GM12878 (cell line): ENCODE measurements at regions of chr2 and their contacts with region 1.

Region 1: GRCh38 chr2:227766373-227766883 is 20.7 kb downstream of the SCYGR8 start:
- DNase-seq: no peak
- ATAC-seq: peak; percentile 100
- H3K4me3 ChIP-seq: no peak overlapping the region
- H3K27ac ChIP-seq: no peak overlapping the region
- H3K4me1 ChIP-seq: no peaks in the 10 kb centered on the region
- H3K27me3 ChIP-seq: no peaks in the 10 kb centered on the region
- CTCF ChIP-seq: peak; percentile 84 to 91 (median 84)
- EP300 ChIP-seq: no peak
- POLR2A ChIP-seq: no peak
- RAD21 ChIP-seq: peak; percentile 93

Region 2: DNA sequence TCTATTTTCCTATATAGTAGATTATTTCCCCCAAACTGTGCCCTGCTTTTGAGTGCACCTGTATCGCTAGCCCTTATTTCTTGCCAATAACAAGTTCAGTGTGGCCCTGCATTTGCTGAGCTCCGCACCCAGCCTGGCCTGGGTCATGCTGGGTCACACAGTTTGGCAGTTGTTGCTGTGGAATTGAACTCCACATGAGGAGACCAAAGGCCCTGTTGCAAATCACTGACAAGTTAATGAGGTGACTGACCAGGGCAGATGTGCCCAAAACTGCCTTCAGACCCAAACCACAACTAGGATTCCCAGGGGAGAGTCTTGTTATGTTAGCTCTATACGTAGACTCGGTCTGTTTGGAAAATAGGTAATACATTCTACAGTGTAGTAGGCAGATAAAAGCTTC is 633.4 kb before region 1 on chr2:
- CTCF ChIA-PET with region 1: interaction called, 12 read pairs
- POLR2A ChIA-PET with region 1: interaction called, 5 read pairs
- RAD21 ChIA-PET with region 1: interaction called, 5 read pairs
- SMC1A ChIA-PET with region 1: interaction called, 11 read pairs
- in situ Hi-C with region 1: loop called (anchors 10 kb)
- intact Hi-C with region 1: loop called (anchors 1 kb)
- DNase-seq: no peak
- ATAC-seq: no peak
- H3K4me3 ChIP-seq: no peak overlapping the region
- H3K27ac ChIP-seq: no peak overlapping the region
- H3K4me1 ChIP-seq: no peaks in the 10 kb centered on the region
- H3K27me3 ChIP-seq: no peaks in the 10 kb centered on the region
- CTCF ChIP-seq: no peak
- EP300 ChIP-seq: no peak
- POLR2A ChIP-seq: no peak
- RAD21 ChIP-seq: no peak

Region 3: DNA sequence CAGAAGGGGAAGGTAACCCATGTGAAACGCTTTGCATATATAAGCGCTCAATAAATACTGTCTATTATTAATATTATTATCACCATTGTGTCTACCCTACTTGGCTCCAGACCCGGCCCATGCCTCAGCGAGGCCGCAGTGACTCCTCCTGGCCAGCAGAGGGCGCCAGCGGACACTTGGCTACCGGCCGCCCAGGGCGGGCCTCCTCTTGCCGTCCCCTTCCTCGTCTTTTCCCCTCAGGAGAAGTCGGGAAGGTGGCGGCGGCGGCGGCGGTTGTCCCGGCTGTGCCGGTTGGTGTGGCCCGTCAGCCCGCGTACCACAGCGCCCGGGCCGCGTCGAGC is 294.5 kb before region 1 on chr2 and contains the start of gene AGFG1:
- CTCF ChIA-PET with region 1: interaction called, 34 read pairs
- POLR2A ChIA-PET with region 1: no interaction called
- RAD21 ChIA-PET with region 1: interaction called, 6 read pairs
- SMC1A ChIA-PET with region 1: interaction called, 10 read pairs
- in situ Hi-C with region 1: no loop called
- intact Hi-C with region 1: loop called (anchors 2 kb)
- DNase-seq: no peak
- ATAC-seq: peak; percentile 81
- H3K4me3 ChIP-seq: peak within 1 kb of the TSS; percentile 83
- H3K27ac ChIP-seq: peak within 1 kb of the TSS; percentile 68
- H3K4me1 ChIP-seq: no peaks in the 10 kb centered on the region
- H3K27me3 ChIP-seq: no peaks in the 10 kb centered on the region
- CTCF ChIP-seq: peak; percentile 95 to 99 (median 98); a peak in 5 of 6 replicates
- EP300 ChIP-seq: no peak
- POLR2A ChIP-seq: peak; percentile 58
- RAD21 ChIP-seq: peak; percentile 71
- polyA plus RNA-seq, gene AGFG1: 28.6 to 53.2 TPM

Region 4: GRCh38 chr2:227661019-227661649 is 105.3 kb before region 1 on chr2:
- CTCF ChIA-PET with region 1: interaction called, 134 read pairs
- POLR2A ChIA-PET with region 1: no interaction called
- RAD21 ChIA-PET with region 1: interaction called, 56 read pairs
- SMC1A ChIA-PET with region 1: interaction called, 56 read pairs
- in situ Hi-C with region 1: loop called (anchors 5 kb)
- intact Hi-C with region 1: loop called (anchors 1 kb)
- DNase-seq: no peak
- ATAC-seq: no peak
- H3K4me3 ChIP-seq: no peak overlapping the region
- H3K27ac ChIP-seq: no peak overlapping the region
- H3K4me1 ChIP-seq: no peaks in the 10 kb centered on the region
- H3K27me3 ChIP-seq: no peaks in the 10 kb centered on the region
- CTCF ChIP-seq: no peak
- EP300 ChIP-seq: no peak
- POLR2A ChIP-seq: no peak
- RAD21 ChIP-seq: no peak

Region 5: GRCh38 chr2:227783404-227784138 is 17.1 kb after region 1 on chr2:
- CTCF ChIA-PET with region 1: interaction called, 32 read pairs
- POLR2A ChIA-PET with region 1: no interaction called
- RAD21 ChIA-PET with region 1: interaction called, 8 read pairs
- SMC1A ChIA-PET with region 1: interaction called, 55 read pairs
- in situ Hi-C with region 1: no loop called
- intact Hi-C with region 1: no loop called
- DNase-seq: peak; percentile 81
- ATAC-seq: peak; percentile 91
- H3K4me3 ChIP-seq: peak overlapping the region; percentile 57
- H3K27ac ChIP-seq: peak overlapping the region; percentile 75
- H3K4me1 ChIP-seq: peaks cover 20% of the 10 kb centered on the region
- H3K27me3 ChIP-seq: no peaks in the 10 kb centered on the region
- CTCF ChIP-seq: no peak
- EP300 ChIP-seq: peak in 1 of 2 experiments; percentile 71; a peak in 1 of 4 replicates
- POLR2A ChIP-seq: 0 out of 2 replicates have a peak, but pooled peaks have one; percentile 39
- RAD21 ChIP-seq: no peak

Region 6: DNA sequence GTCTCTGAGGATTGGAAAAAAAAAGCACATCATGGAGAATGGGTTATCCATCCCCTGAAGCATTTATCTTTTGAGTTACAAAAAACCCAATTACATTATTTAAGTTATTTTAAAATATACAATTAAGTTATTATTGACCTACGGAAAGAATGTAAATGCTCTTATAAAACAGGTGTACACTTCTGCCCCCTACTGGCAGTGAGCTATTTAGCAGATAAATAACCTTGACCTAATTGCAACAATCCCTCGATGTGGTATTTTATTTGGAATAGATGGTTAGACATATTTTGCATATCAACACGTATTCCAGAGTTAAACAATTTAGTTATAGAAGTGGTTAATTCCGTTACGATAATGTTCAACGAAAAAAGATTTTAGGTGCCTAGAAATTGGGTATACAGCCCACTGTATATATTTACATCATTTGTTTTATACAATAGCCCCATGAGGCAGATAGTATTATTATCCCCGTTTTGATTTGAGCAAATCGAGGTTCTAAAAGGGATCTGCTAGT is 95.9 kb after region 1 on chr2:
- CTCF ChIA-PET with region 1: interaction called, 387 read pairs
- POLR2A ChIA-PET with region 1: interaction called, 3 read pairs
- RAD21 ChIA-PET with region 1: interaction called, 60 read pairs
- SMC1A ChIA-PET with region 1: interaction called, 133 read pairs
- in situ Hi-C with region 1: no loop called
- intact Hi-C with region 1: no loop called
- DNase-seq: no peak
- ATAC-seq: peak; percentile 63
- H3K4me3 ChIP-seq: no peak overlapping the region
- H3K27ac ChIP-seq: no peak overlapping the region
- H3K4me1 ChIP-seq: no peaks in the 10 kb centered on the region
- H3K27me3 ChIP-seq: no peaks in the 10 kb centered on the region; a peak in 1 of 4 replicates
- CTCF ChIP-seq: peak; percentile 55 to 70 (median 66)
- EP300 ChIP-seq: no peak
- POLR2A ChIP-seq: no peak
- RAD21 ChIP-seq: peak; percentile 86

Region 7: GRCh38 chr2:227914362-227914761 is 147.9 kb after region 1 on chr2:
- CTCF ChIA-PET with region 1: no interaction called
- POLR2A ChIA-PET with region 1: no interaction called
- RAD21 ChIA-PET with region 1: no interaction called
- SMC1A ChIA-PET with region 1: no interaction called
- in situ Hi-C with region 1: no loop called
- intact Hi-C with region 1: no loop called
- DNase-seq: no peak
- ATAC-seq: no peak
- H3K4me3 ChIP-seq: no peak overlapping the region
- H3K27ac ChIP-seq: no peak overlapping the region
- H3K4me1 ChIP-seq: no peaks in the 10 kb centered on the region
- H3K27me3 ChIP-seq: no peaks in the 10 kb centered on the region
- CTCF ChIP-seq: no peak
- EP300 ChIP-seq: no peak
- POLR2A ChIP-seq: no peak
- RAD21 ChIP-seq: no peak